HCT116 (cell line): ENCODE measurements at regions of chr14 and their contacts with region 1.

Region 1: GRCh38 chr14:104078031-104078455 is 7.5 kb upstream of the ASPG start:
- DNase-seq: peak; percentile 88
- ATAC-seq: peak; percentile 98
- H3K4me3 ChIP-seq: no peak overlapping the region
- H3K27ac ChIP-seq: no peak overlapping the region
- H3K4me1 ChIP-seq: peaks cover 2 to 5% of the 10 kb centered on the region in 2 experiments; a peak in 3 of 4 replicates
- H3K27me3 ChIP-seq: no peaks in the 10 kb centered on the region
- CTCF ChIP-seq: peak; percentile 100
- POLR2A ChIP-seq: no peak
- RAD21 ChIP-seq: peak; percentile 100

Region 2: GRCh38 chr14:103576371-103577024 is 501.5 kb before region 1 on chr14:
- CTCF ChIA-PET with region 1: interaction called, 3 read pairs
- POLR2A ChIA-PET with region 1: no interaction called
- RAD21 ChIA-PET with region 1: no interaction called
- intact Hi-C with region 1: loop called (anchors 5 kb)
- DNase-seq: peak; percentile 53
- ATAC-seq: peak; percentile 96
- H3K4me3 ChIP-seq: peak overlapping the region in 1 of 2 experiments; percentile 4; a peak in 1 of 4 replicates
- H3K27ac ChIP-seq: peak overlapping the region; percentile 40
- H3K4me1 ChIP-seq: peaks cover 23 to 29% of the 10 kb centered on the region in 2 experiments
- H3K27me3 ChIP-seq: no peaks in the 10 kb centered on the region
- CTCF ChIP-seq: no peak
- POLR2A ChIP-seq: no peak
- RAD21 ChIP-seq: no peak; the same call in none of the 2 replicates

Region 3: DNA sequence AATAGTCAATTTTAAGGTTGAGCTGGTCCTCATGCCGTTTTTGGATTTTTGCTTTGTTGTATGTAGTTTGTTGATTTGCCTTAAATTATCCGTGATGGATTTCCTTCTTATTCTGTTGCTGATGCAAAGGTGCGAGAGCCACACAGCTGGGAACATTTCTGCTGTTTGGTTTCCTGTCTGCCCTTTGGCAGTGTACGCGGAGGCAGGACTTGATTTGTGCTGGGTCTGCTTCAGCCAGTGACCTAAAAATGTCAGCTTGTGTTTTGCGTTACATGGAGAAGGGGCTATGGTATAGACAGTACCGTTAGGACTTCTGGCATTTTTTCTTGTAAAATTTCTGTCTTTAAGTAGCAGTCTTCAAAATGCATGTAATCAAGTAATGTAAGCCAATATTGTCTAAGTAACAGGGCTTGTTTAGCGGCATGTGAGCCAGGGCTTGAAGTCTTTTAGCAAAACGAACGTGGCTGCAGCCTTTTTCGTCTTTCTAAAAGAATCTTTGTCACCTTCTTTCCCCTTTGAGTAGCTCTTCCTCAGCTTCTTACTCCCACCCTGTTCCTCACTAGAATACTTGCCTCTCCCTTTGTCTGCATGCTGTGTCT is 117.5 kb before region 1 on chr14:
- CTCF ChIA-PET with region 1: no interaction called
- POLR2A ChIA-PET with region 1: no interaction called
- RAD21 ChIA-PET with region 1: no interaction called
- intact Hi-C with region 1: no loop called
- DNase-seq: no peak
- ATAC-seq: no peak
- H3K4me3 ChIP-seq: no peak overlapping the region
- H3K27ac ChIP-seq: no peak overlapping the region
- H3K4me1 ChIP-seq: no peaks in the 10 kb centered on the region
- H3K27me3 ChIP-seq: no peaks in the 10 kb centered on the region
- CTCF ChIP-seq: no peak
- POLR2A ChIP-seq: no peak
- RAD21 ChIP-seq: no peak

Region 4: GRCh38 chr14:104094709-104095438 is 16.8 kb after region 1 on chr14:
- CTCF ChIA-PET with region 1: interaction called, 11 read pairs
- POLR2A ChIA-PET with region 1: interaction called, 3 read pairs
- RAD21 ChIA-PET with region 1: interaction called in 1 of 2 experiments, 4 read pairs
- intact Hi-C with region 1: no loop called
- DNase-seq: no peak
- ATAC-seq: peak; percentile 84
- H3K4me3 ChIP-seq: no peak overlapping the region
- H3K27ac ChIP-seq: peak overlapping the region; percentile 16; the same call in 1 of the 2 replicates
- H3K4me1 ChIP-seq: peaks cover 7 to 14% of the 10 kb centered on the region in 2 experiments; a peak in 3 of 4 replicates
- H3K27me3 ChIP-seq: no peaks in the 10 kb centered on the region
- CTCF ChIP-seq: peak; percentile 83 to 89 (median 86)
- POLR2A ChIP-seq: no peak
- RAD21 ChIP-seq: peak; percentile 86

Region 5: GRCh38 chr14:104130974-104131651 is 53.1 kb after region 1 on chr14:
- CTCF ChIA-PET with region 1: interaction called, 20 read pairs
- POLR2A ChIA-PET with region 1: interaction called, 3 read pairs
- RAD21 ChIA-PET with region 1: interaction called in 1 of 2 experiments, 3 read pairs
- intact Hi-C with region 1: loop called (anchors 1 kb)
- DNase-seq: no peak
- ATAC-seq: peak; percentile 81
- H3K4me3 ChIP-seq: no peak overlapping the region
- H3K27ac ChIP-seq: no peak overlapping the region
- H3K4me1 ChIP-seq: no peaks in the 10 kb centered on the region; a peak in 1 of 4 replicates
- H3K27me3 ChIP-seq: no peaks in the 10 kb centered on the region
- CTCF ChIP-seq: peak; percentile 75 to 98 (median 81)
- POLR2A ChIP-seq: no peak
- RAD21 ChIP-seq: peak; percentile 97

Region 6: GRCh38 chr14:104563742-104564615 is 485.9 kb after region 1 on chr14:
- CTCF ChIA-PET with region 1: interaction called, 22 read pairs
- POLR2A ChIA-PET with region 1: no interaction called
- RAD21 ChIA-PET with region 1: interaction called, 6 to 7 read pairs
- intact Hi-C with region 1: loop called (anchors 1 kb)
- DNase-seq: peak; percentile 51
- ATAC-seq: peak; percentile 95
- H3K4me3 ChIP-seq: no peak overlapping the region
- H3K27ac ChIP-seq: no peak overlapping the region
- H3K4me1 ChIP-seq: peaks cover 0 to 9% of the 10 kb centered on the region in 2 experiments; a peak in 2 of 4 replicates
- H3K27me3 ChIP-seq: no peaks in the 10 kb centered on the region
- CTCF ChIP-seq: peak; percentile 89 to 94 (median 93)
- POLR2A ChIP-seq: no peak
- RAD21 ChIP-seq: peak; percentile 98

Region 7: GRCh38 chr14:104639889-104640548 is 562.0 kb after region 1 on chr14:
- CTCF ChIA-PET with region 1: interaction called, 6 read pairs
- POLR2A ChIA-PET with region 1: no interaction called
- RAD21 ChIA-PET with region 1: no interaction called
- intact Hi-C with region 1: loop called (anchors 1 kb)
- DNase-seq: peak; percentile 27
- ATAC-seq: peak; percentile 99
- H3K4me3 ChIP-seq: 0 out of 4 replicates have a peak overlapping the region, but pooled peaks of 1 of the 2 experiments have one; percentile 5
- H3K27ac ChIP-seq: no peak overlapping the region; the same call in 1 of the 2 replicates
- H3K4me1 ChIP-seq: peaks cover 4 to 6% of the 10 kb centered on the region in 2 experiments
- H3K27me3 ChIP-seq: peaks cover 5% of the 10 kb centered on the region; the same call in 1 of the 2 replicates
- CTCF ChIP-seq: peak; percentile 89 to 98 (median 96)
- POLR2A ChIP-seq: no peak
- RAD21 ChIP-seq: peak; percentile 98